K562 (cell line): ENCODE measurements at regions of chr20 and their contacts with region 1.

Region 1: DNA sequence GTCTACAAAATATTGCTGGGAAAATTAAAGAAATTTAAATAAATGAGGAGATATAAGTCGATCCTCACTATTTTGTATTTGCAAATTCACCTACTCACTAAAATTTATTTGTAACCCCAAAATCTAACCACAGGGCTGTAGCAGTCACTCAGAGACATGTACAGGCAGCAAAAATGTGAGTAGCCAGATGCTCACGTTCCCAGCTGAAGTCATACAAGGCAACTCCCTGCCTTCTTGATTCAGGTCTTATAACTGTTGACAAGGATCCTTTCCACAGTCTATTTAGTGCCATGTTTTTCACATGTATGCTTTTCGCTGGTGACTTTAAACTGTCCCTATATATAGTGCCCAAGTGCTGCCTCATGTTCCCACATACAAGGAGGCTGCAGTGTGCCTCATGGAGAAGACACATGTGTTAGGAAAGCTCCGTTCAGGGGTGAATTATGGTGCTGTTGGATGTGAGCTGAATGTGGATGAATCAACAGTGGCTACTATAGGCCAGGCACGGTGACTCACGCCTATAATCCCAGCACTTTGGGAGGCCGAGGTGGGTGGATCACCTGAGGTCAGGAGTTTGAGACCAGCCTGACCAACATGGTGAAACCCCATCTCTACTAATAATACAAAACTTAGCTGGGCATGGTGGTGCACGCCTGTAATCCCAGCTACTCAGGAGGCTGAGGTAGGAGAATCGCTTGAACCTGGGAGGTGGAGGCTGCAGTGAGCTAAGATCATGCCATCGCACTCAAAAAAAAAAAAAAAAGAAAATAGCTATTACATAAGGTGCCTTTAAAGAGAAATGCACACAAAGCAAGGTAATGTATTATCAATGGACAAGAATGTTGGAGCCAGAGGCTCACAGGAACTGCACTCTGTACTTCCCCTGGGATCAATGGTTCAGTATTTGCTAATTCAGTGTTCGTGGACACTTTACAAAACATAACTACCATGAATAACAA is 55.3 kb downstream of the STK35 start:
- DNase-seq: no peak
- ATAC-seq: no peak
- H3K4me3 ChIP-seq: no peak overlapping the region
- H3K27ac ChIP-seq: no peak overlapping the region
- H3K4me1 ChIP-seq: no peaks in the 10 kb centered on the region
- H3K27me3 ChIP-seq: peaks cover 2 to 10% of the 10 kb centered on the region in 2 experiments; a peak in 3 of 5 replicates
- CTCF ChIP-seq: no peak
- EP300 ChIP-seq: no peak
- POLR2A ChIP-seq: no peak
- RAD21 ChIP-seq: no peak

Region 2: DNA sequence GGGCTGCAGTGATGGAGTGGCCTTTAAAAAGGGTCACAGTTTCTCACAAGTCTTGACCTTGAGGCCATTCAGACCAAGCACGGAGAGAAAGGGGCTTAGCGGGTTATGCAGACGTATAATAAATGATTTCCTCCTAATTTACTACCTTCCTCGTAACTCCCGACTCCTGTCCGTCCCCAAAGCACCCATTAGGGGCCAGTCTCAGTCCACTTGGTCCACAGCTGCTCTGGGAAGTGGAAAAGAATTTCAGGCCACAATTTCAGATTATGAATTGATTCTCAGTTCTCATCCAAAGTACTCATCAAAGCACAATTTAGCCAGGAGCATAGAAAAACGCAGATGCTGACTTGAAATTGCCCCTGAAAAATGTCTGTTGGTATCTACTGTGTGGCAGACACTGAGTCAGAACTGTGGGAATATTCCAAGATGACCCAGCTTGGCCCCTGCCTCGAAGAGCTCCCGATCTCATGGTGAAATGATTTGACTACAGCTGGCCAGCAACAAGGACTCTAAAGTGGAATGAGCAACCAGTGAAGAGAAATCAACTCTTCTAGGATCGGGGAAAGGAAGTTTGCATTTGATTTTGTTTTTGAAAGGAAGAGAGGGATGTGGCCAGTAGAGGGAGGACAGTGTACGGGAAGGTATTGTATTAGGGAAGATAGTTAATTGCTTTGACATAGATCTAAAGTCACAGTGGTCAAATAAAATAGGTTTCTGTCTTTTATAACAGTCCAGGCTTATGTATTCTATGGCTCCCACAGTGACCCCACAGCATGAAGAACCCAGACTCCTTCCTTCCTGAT is 70.6 kb before region 1 on chr20:
- CTCF ChIA-PET with region 1: no interaction called
- POLR2A ChIA-PET with region 1: no interaction called
- in situ Hi-C with region 1: no loop called
- intact Hi-C with region 1: loop called (anchors 5 kb)
- DNase-seq: no peak
- ATAC-seq: no peak
- H3K4me3 ChIP-seq: no peak overlapping the region
- H3K27ac ChIP-seq: no peak overlapping the region
- H3K4me1 ChIP-seq: no peaks in the 10 kb centered on the region
- H3K27me3 ChIP-seq: peaks cover 6 to 10% of the 10 kb centered on the region in 2 experiments; a peak in 2 of 5 replicates
- CTCF ChIP-seq: peak in 1 of 3 experiments; percentile 13; a peak in 2 of 6 replicates
- EP300 ChIP-seq: no peak
- POLR2A ChIP-seq: no peak
- RAD21 ChIP-seq: no peak

Region 3: DNA sequence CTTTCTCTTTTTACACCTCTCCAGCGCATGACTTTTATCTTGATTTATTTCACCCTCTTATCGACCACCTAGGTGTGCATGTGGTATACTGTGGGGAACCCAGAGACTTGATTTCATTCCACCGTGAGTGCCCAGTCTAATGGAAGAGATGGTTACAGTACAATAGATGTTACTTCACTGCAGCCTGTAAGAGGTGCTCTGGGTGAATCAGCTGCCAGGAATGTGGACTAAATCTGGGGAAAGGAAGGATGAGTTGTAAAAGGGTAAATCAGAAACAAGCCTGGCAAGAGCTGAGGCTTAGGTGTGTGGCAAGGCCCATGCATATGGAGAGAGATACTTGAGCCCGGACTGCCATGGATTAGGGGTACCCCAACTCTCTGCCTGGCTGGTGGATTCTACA is 48.0 kb before region 1 on chr20:
- CTCF ChIA-PET with region 1: no interaction called
- POLR2A ChIA-PET with region 1: no interaction called
- in situ Hi-C with region 1: no loop called
- intact Hi-C with region 1: no loop called
- DNase-seq: no peak
- ATAC-seq: no peak
- H3K4me3 ChIP-seq: no peak overlapping the region
- H3K27ac ChIP-seq: no peak overlapping the region
- H3K4me1 ChIP-seq: peaks cover 0 to 15% of the 10 kb centered on the region in 2 experiments; a peak in 3 of 5 replicates
- H3K27me3 ChIP-seq: no peaks in the 10 kb centered on the region
- CTCF ChIP-seq: no peak
- EP300 ChIP-seq: no peak
- POLR2A ChIP-seq: no peak
- RAD21 ChIP-seq: no peak